Ovary (tissue), 10 donors: ENCODE measurements at regions of chr9 and their contacts with region 1.

Region 1: GRCh38 chr9:121074635-121075385 is at the start of gene CNTRL:
- DNase-seq: peak; percentile 88 to 92 (median 89)
- H3K4me3 ChIP-seq: peak within 1 kb of the TSS; percentile 72
- H3K27ac ChIP-seq: peak within 1 kb of the TSS; percentile 75 to 80
- H3K4me1 ChIP-seq: peaks cover 5% of the 10 kb centered on the region
- H3K27me3 ChIP-seq: no peaks in the 10 kb centered on the region
- CTCF ChIP-seq: peak in 1 of 3 donors; percentile 49
- EP300 ChIP-seq: no peak
- POLR2A ChIP-seq: peak; percentile 81
- total RNA-seq, gene CNTRL: 16.0 to 27.2 (median 19.8) TPM

Region 2: GRCh38 chr9:120583958-120584369 is 490.8 kb before region 1 on chr9:
- intact Hi-C with region 1: no loop called
- DNase-seq: no peak
- H3K4me3 ChIP-seq: no peak overlapping the region
- H3K27ac ChIP-seq: no peak overlapping the region
- H3K4me1 ChIP-seq: peaks cover 3% of the 10 kb centered on the region
- H3K27me3 ChIP-seq: no peaks in the 10 kb centered on the region
- CTCF ChIP-seq: no peak
- EP300 ChIP-seq: no peak
- POLR2A ChIP-seq: no peak

Region 3: DNA sequence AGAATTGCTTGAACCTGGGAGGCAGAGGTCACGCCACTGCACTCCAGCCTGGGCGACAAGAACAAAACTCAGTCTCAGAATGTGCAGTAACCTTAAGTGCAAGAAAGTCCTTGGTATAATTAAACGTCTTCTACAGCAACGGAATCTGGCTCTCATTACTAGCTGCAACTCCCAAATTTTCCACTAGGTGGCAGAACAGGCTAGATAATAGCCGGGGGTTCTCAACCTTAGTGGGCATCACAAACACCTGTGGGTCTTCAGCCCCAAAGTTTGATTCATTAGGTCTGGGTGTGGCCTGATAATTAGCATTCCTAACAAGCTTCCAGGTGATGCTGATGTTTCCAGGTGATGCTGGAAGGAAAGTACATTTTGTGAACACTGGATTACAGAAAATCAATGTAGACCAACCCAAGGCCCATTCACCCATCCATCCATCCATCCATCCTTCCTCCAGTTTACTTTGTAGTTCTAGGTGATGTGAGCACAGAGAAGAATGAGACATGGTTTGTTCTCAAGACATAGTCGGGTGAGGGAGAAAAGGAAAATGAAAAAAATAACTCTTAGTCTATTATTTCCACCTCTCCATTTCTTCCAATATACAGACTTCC is 318.9 kb before region 1 on chr9:
- intact Hi-C with region 1: loop called in 2 of 4 experiments (anchors 5 to 10 kb)
- DNase-seq: peak in 4 of 5 donors; percentile 24 to 62 (median 53)
- H3K4me3 ChIP-seq: no peak overlapping the region
- H3K27ac ChIP-seq: peak overlapping the region in 1 of 2 donors; percentile 25
- H3K4me1 ChIP-seq: no peaks in the 10 kb centered on the region
- H3K27me3 ChIP-seq: no peaks in the 10 kb centered on the region
- CTCF ChIP-seq: peak; percentile 75 to 89 (median 80)
- EP300 ChIP-seq: no peak
- POLR2A ChIP-seq: no peak

Region 4: GRCh38 chr9:120868676-120869359 is 206.0 kb before region 1 on chr9:
- intact Hi-C with region 1: loop called in 1 of 4 experiments (anchors 5 kb)
- DNase-seq: peak; percentile 97 to 98 (median 97)
- H3K4me3 ChIP-seq: peak overlapping the region; percentile 41
- H3K27ac ChIP-seq: peak overlapping the region; percentile 54 to 83
- H3K4me1 ChIP-seq: peaks cover 6% of the 10 kb centered on the region
- H3K27me3 ChIP-seq: no peaks in the 10 kb centered on the region
- CTCF ChIP-seq: peak in 2 of 3 donors; percentile 62 to 70
- EP300 ChIP-seq: no peak
- POLR2A ChIP-seq: peak; percentile 46